ENCODE measurements at regions of chr1 and their contacts with region 1.

Region 1: DNA sequence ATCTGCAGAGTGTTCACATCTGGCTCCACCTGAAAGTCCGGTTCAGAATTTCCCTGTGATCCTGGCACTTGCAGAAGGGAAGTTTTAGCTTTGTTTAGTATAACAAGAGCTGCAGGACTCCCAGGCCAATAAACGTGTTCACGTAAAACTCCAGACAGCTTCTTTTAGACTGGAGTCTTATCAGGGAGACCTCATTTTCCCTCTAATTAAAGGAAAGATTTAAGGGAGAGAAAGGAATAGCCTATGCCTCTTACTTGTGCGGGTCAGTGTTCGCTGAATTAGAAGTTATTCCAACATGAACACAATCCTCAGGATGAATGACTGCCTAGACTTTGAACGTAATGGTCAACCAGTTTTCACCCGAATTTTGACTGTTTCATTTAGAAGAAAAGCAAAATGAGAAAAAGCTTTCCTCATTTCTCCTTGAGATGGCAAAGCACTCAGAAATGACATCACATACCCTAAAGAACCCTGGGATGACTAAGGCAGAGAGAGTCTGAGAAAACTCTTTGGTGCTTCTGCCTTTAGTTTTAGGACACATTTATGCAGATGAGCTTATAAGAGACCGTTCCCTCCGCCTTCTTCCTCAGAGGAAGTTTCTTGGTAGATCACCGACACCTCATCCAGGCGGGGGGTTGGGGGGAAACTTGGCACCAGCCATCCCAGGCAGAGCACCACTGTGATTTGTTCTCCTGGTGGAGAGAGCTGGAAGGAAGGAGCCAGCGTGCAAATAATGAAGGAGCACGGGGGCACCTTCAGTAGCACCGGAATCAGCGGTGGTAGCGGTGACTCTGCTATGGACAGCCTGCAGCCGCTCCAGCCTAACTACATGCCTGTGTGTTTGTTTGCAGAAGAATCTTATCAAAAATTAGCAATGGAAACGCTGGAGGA is 202.1 kb upstream of the SGIP1 start:
- DNase-seq: peak; percentile 43 to 83
- ATAC-seq: peak; percentile 41 to 58
- H3K4me3 ChIP-seq: peak overlapping the region; percentile 48 to 63 (median 59)
- H3K27ac ChIP-seq: peak overlapping the region; percentile 86 to 92 (median 90)
- H3K4me1 ChIP-seq: peaks cover 41 to 53% of the 10 kb centered on the region in 2 donors
- H3K27me3 ChIP-seq: no peaks in the 10 kb centered on the region
- CTCF ChIP-seq: peak; percentile 39 to 55 (median 50)
- POLR2A ChIP-seq: peak; percentile 30 to 51

Region 2: DNA sequence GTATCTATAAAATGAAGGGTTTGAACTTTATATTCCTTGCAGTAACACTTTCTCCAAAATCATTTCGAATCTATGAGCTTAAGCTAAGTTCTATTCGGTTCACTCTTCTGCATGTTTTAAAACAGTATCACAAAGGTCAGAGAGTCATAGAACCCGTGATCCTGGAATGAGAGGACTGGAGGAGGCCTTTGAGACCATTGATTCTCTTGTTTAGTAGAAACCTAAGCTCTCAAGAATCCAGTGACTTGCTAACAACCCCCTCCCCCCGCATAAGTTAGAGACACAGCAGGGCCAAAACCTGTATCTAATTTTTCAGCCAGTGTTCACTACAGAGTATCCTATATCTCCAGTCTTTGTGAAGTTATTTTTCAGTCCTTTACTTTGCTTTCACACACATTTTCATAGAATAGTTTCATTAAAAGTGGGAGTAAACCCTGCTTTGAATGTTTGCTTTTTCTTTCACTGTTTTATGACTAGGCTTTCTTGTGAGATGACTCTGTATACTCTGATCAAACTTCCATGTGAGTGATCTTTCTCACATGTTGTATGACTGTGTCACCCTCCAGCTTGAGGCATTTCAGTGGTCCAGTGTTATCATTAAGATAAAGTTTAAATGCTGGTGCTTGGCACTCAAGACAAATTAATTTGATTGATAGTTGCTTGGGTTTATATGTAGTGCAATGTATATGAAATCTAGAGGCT is 73.3 kb before region 1 on chr1:
- in situ Hi-C with region 1: loop called in 1 of 4 experiments (anchors 5 kb)
- intact Hi-C with region 1: no loop called
- DNase-seq: no peak
- ATAC-seq: no peak
- H3K4me3 ChIP-seq: no peak overlapping the region
- H3K27ac ChIP-seq: peak overlapping the region in 2 of 4 donors; percentile 10 to 11
- H3K4me1 ChIP-seq: peaks cover 9 to 37% of the 10 kb centered on the region in 2 donors
- H3K27me3 ChIP-seq: no peaks in the 10 kb centered on the region
- CTCF ChIP-seq: no peak
- POLR2A ChIP-seq: no peak

Region 3: GRCh38 chr1:66265796-66266195 is 66.1 kb before region 1 on chr1:
- in situ Hi-C with region 1: loop called in 1 of 4 experiments (anchors 10 kb)
- intact Hi-C with region 1: loop called (anchors 1 kb)
- DNase-seq: peak in 1 of 2 donors; percentile 24
- ATAC-seq: no peak
- H3K4me3 ChIP-seq: no peak overlapping the region
- H3K27ac ChIP-seq: peak overlapping the region; percentile 74 to 88 (median 82)
- H3K4me1 ChIP-seq: peaks cover 52 to 76% of the 10 kb centered on the region in 2 donors
- H3K27me3 ChIP-seq: no peaks in the 10 kb centered on the region
- CTCF ChIP-seq: no peak
- POLR2A ChIP-seq: no peak

Region 4: DNA sequence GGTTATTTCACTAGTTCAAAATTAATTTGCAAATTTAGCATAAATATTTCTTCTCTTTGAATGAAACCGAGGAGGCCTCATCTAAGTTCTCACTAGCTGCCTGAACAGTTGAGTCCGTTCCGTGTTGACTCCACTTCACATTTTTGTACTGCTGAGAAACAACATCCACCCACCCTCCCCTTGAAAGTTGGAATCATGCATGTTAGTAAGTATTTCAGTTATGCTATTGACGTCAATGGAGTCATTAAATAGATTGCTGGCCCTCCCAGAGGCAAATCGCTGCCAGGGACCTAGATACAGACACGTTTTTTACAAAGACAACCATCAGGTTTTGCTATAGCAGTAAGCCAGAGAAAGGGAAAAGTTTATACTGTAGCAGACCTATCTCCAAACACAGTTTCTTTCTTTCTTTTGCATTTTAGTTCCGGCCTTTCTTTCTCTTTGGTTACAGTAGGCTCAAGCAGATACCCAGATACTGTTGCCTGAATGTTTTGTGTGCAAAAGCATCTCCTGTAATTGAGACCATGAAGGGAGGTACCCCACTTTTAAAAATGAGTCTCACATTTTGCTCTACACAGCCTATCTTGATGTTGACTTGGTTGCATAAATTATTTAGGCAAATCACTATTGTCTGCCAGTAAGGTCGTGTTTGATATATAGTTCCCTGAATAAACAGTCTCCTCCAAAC is 60.5 kb before region 1 on chr1:
- in situ Hi-C with region 1: loop called in 1 of 4 experiments (anchors 10 kb)
- intact Hi-C with region 1: loop called (anchors 1 kb)
- DNase-seq: peak; percentile 72 to 90
- ATAC-seq: peak; percentile 85 to 91
- H3K4me3 ChIP-seq: peak overlapping the region; percentile 19 to 46 (median 30)
- H3K27ac ChIP-seq: peak overlapping the region; percentile 74 to 88 (median 82)
- H3K4me1 ChIP-seq: peaks cover 61 to 79% of the 10 kb centered on the region in 2 donors
- H3K27me3 ChIP-seq: no peaks in the 10 kb centered on the region
- CTCF ChIP-seq: no peak
- POLR2A ChIP-seq: peak; percentile 19 to 40

Region 5: GRCh38 chr1:66403007-66403731 is 71.3 kb after region 1 on chr1:
- in situ Hi-C with region 1: no loop called
- intact Hi-C with region 1: no loop called
- DNase-seq: no peak
- ATAC-seq: no peak
- H3K4me3 ChIP-seq: no peak overlapping the region
- H3K27ac ChIP-seq: peak overlapping the region; percentile 52 to 63 (median 56)
- H3K4me1 ChIP-seq: peaks cover 9 to 15% of the 10 kb centered on the region in 2 donors
- H3K27me3 ChIP-seq: no peaks in the 10 kb centered on the region
- CTCF ChIP-seq: no peak
- POLR2A ChIP-seq: no peak

Region 6: GRCh38 chr1:66924756-66925557 is 593.1 kb after region 1 on chr1 and contains the starts of genes DNAI4 and MIER1:
- in situ Hi-C with region 1: loop called in 1 of 4 experiments (anchors 25 kb)
- intact Hi-C with region 1: no loop called
- DNase-seq: peak; percentile 96 to 97
- ATAC-seq: peak; percentile 93 to 96
- H3K4me3 ChIP-seq: peak within 1 kb of the TSS; percentile 69 to 96 (median 86)
- H3K27ac ChIP-seq: peak within 1 kb of the TSS; percentile 85 to 97 (median 92)
- H3K4me1 ChIP-seq: peaks cover 29 to 35% of the 10 kb centered on the region in 2 donors
- H3K27me3 ChIP-seq: no peaks in the 10 kb centered on the region
- CTCF ChIP-seq: peak; percentile 23 to 41 (median 25)
- POLR2A ChIP-seq: peak; percentile 56 to 68
- total RNA-seq, gene DNAI4: 0.19 to 0.41 (median 0.29) TPM in 3 of 4 donors, not detected in the other
- total RNA-seq, gene MIER1: 14.8 to 21.7 (median 15.4) TPM

Measured in gastrocnemius medialis (tissue), 4 donors.